H1 (cell line): ENCODE measurements at regions of chr2 and their contacts with region 1.

Region 1: GRCh38 chr2:134454931-134455330 is 201.1 kb downstream of the MGAT5 start:
- DNase-seq: no peak
- H3K4me3 ChIP-seq: no peak overlapping the region
- H3K27ac ChIP-seq: no peak overlapping the region
- H3K4me1 ChIP-seq: no peaks in the 10 kb centered on the region; a peak in 2 of 7 replicates
- H3K27me3 ChIP-seq: no peaks in the 10 kb centered on the region
- CTCF ChIP-seq: no peak
- EP300 ChIP-seq: no peak
- POLR2A ChIP-seq: no peak
- RAD21 ChIP-seq: no peak

Region 2: DNA sequence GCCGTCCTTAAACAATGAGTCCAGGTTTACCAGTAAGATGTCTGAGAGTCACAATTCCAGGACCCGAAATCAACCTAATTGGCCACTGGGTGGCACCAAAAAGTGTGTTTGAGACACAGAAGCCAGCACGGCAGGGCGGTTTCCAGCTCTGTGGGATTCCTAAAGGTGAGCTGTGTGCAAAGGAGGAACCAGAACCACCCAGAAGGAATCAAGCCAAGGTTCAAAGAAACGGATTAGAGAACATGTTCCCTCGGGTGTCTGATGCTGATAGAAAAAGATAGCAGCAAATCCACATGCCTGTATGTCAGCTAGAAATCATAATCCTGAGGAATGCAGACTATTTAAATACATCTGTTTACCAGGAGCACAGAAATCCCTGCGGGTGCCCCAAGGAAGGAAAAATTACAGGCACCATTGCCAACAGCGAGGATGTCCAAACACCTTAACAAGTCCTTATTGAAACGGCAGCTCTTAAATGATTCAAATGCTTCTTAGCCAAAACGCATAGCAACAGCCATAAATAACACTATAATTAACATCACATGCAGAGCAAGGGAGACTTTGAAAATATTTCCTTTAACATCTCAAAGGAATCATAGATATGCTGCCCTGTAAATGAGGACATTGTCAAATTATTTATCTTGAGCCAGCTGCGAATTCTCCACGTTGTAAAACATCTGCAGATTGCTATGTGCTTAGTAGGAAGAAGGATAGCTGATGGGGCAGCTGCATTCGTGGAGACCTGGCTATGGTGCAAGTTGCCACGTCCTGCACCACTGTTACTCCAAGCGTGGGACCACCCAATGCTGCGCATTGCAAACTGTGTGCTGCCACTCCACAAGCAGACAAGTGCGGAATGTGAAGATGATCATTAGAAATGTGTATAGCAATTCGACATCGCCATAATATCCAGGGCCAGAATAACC is 567.9 kb before region 1 on chr2:
- CTCF ChIA-PET with region 1: interaction called, 28 read pairs
- POLR2A ChIA-PET with region 1: no interaction called
- DNase-seq: peak; percentile 54 to 79
- H3K4me3 ChIP-seq: no peak overlapping the region
- H3K27ac ChIP-seq: no peak overlapping the region
- H3K4me1 ChIP-seq: peaks cover 0 to 3% (median 2%) of the 10 kb centered on the region in 4 experiments; a peak in 3 of 7 replicates
- H3K27me3 ChIP-seq: no peaks in the 10 kb centered on the region
- CTCF ChIP-seq: peak; percentile 53 to 80 (median 74)
- EP300 ChIP-seq: no peak
- POLR2A ChIP-seq: no peak
- RAD21 ChIP-seq: peak; percentile 87 to 94

Region 3: DNA sequence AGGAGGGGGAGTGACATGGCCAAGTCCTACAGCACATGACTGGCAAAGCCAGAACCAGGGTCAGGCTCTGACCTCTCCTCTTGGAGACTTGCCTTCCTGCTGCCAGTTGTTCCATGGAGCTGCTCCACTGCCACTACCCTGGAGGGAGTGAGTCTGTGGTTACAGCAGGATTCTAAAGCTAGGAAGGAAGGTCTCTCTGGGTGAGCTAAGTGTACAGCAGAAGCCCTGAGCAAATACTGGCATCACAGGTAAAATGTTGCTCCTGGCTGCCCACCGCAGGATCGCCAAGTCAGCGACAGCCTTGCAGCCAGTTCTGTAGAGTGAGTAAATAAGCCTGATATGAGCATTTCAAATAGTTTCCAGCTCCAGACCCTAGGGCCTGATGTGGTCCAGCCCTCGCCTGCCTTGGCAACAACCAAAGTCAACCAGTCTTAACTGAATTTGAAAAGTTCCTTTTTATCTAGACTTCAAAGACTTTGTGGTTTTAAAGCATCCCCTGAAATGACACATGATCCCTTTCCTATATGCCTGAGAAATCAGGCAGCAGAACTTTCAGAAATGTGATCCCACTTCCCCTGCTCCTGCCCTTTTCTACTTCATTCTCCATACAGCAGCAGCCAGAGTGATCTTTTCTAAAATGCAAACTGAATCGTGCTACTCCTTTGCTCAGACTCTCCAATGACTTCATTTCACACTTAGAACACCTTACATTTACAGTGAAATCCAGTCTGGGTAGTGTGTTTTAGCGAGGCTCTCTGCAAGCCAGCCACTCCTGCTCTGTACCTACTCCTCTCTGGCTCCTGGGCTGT is 86.7 kb before region 1 on chr2:
- CTCF ChIA-PET with region 1: interaction called, 11 read pairs
- POLR2A ChIA-PET with region 1: no interaction called
- DNase-seq: no peak
- H3K4me3 ChIP-seq: no peak overlapping the region
- H3K27ac ChIP-seq: no peak overlapping the region
- H3K4me1 ChIP-seq: no peaks in the 10 kb centered on the region
- H3K27me3 ChIP-seq: no peaks in the 10 kb centered on the region
- CTCF ChIP-seq: no peak
- EP300 ChIP-seq: no peak
- POLR2A ChIP-seq: no peak
- RAD21 ChIP-seq: no peak

Region 4: DNA sequence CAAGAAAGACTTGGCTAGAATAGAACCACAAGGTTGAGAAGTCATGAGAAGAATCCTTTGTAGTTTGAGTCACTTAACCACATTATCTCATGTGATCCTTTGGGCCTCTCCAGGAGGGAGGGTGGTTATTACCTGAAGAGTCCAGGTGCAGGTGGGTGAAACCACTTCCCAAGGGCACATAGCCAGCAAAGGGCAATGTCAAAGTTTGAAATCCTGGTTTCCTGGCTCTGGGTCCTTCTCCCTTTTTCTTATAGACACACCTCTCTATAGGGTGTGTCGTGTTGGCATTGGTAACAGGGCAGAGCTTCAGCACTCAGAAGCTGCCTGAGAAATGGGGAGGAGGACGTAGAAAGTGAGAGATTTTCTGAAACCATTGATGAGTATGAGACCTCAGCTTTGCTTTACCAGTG is 63.2 kb before region 1 on chr2:
- CTCF ChIA-PET with region 1: interaction called, 10 read pairs
- POLR2A ChIA-PET with region 1: no interaction called
- DNase-seq: no peak
- H3K4me3 ChIP-seq: no peak overlapping the region
- H3K27ac ChIP-seq: no peak overlapping the region
- H3K4me1 ChIP-seq: no peaks in the 10 kb centered on the region
- H3K27me3 ChIP-seq: no peaks in the 10 kb centered on the region
- CTCF ChIP-seq: no peak
- EP300 ChIP-seq: no peak
- POLR2A ChIP-seq: no peak
- RAD21 ChIP-seq: no peak

Region 5: DNA sequence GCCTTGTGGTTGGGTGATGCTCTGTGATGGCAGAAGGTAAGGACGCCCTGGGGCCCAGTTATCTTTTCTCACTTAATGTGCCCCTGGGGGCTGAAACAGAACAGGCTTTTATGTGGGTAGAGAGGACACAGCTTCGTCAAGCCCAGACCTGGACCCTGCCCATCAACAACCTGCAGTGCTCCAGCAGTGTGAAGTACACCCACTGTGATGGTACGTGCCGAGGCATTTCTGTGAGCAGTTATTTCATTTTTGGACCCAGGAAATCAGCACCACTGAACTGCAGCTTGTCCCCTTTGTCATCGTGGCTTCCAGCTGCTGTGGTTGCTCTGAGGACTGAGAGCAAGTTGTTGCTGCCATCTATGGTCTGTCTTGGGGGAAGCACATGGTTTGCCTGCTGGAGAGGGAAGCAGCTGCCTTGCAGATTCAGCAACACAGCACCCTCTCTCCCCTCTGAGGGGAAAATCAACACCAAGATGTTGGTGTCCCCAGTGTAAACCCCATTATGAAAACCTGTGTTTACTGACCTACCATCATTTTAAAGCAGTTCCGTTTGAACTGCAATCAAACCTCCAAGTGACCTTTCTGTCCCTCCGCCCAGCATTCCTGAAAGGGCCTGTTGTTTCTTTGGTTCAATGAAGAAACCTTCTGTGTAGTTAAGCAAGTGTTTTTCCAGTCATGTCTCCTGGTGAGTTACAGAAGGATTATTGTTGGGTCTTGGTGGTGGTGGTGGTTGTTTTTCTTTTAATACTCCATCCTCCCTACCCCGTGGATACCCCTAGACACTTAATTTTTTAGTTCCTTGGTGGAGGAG is 42.9 kb before region 1 on chr2:
- CTCF ChIA-PET with region 1: interaction called, 34 read pairs
- POLR2A ChIA-PET with region 1: no interaction called
- DNase-seq: peak; percentile 39 to 60
- H3K4me3 ChIP-seq: no peak overlapping the region
- H3K27ac ChIP-seq: no peak overlapping the region
- H3K4me1 ChIP-seq: peaks cover 0 to 5% (median 0%) of the 10 kb centered on the region in 4 experiments; a peak in 1 of 7 replicates
- H3K27me3 ChIP-seq: no peaks in the 10 kb centered on the region
- CTCF ChIP-seq: peak; percentile 71 to 92 (median 73)
- EP300 ChIP-seq: no peak
- POLR2A ChIP-seq: no peak
- RAD21 ChIP-seq: peak; percentile 89 to 91

Region 6: GRCh38 chr2:134431838-134432434 is 23.0 kb before region 1 on chr2:
- CTCF ChIA-PET with region 1: interaction called, 132 read pairs
- POLR2A ChIA-PET with region 1: no interaction called
- DNase-seq: no peak
- H3K4me3 ChIP-seq: no peak overlapping the region
- H3K27ac ChIP-seq: no peak overlapping the region
- H3K4me1 ChIP-seq: peaks cover 0 to 8% (median 5%) of the 10 kb centered on the region in 4 experiments; a peak in 4 of 7 replicates
- H3K27me3 ChIP-seq: peaks cover 3 to 40% (median 22%) of the 10 kb centered on the region in 4 experiments; a peak in 6 of 7 replicates
- CTCF ChIP-seq: no peak
- EP300 ChIP-seq: no peak
- POLR2A ChIP-seq: no peak
- RAD21 ChIP-seq: no peak